HepG2 (cell line): ENCODE measurements at regions of chr6 and their contacts with region 1.

Region 1: GRCh38 chr6:53986165-53986720 is 125.0 kb upstream of the MLIP start:
- DNase-seq: peak; percentile 46
- ATAC-seq: peak; percentile 86
- H3K4me3 ChIP-seq: no peak overlapping the region
- H3K27ac ChIP-seq: no peak overlapping the region
- H3K4me1 ChIP-seq: no peaks in the 10 kb centered on the region
- H3K27me3 ChIP-seq: no peaks in the 10 kb centered on the region
- CTCF ChIP-seq: peak; percentile 82
- EP300 ChIP-seq: no peak
- POLR2A ChIP-seq: no peak
- RAD21 ChIP-seq: peak; percentile 82

Region 2: DNA sequence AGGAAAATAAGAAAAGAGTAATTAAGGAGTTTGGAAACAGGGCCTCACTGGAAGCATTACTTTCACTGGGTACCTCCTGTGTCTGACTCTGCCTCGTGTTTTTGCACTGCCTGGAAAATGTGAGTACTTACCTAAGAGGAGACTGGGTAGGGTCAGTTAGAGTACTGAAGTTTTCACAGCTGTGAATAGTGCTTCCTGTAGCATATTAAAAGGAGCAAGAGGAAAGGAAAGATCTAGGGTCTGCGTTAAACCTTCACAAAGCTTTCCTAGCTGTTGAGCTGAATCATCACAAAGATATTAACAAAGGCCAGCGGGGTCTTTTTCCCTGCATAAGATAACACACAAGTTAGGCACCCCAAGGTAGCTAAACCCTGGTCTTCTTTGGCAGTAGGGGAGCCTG is 207.3 kb after region 1 on chr6:
- CTCF ChIA-PET with region 1: no interaction called
- POLR2A ChIA-PET with region 1: no interaction called
- in situ Hi-C with region 1: no loop called
- intact Hi-C with region 1: loop called (anchors 1 kb)
- DNase-seq: no peak
- ATAC-seq: no peak
- H3K4me3 ChIP-seq: no peak overlapping the region
- H3K27ac ChIP-seq: no peak overlapping the region
- H3K4me1 ChIP-seq: no peaks in the 10 kb centered on the region
- H3K27me3 ChIP-seq: no peaks in the 10 kb centered on the region
- CTCF ChIP-seq: no peak
- EP300 ChIP-seq: no peak
- POLR2A ChIP-seq: no peak
- RAD21 ChIP-seq: no peak

Region 3: DNA sequence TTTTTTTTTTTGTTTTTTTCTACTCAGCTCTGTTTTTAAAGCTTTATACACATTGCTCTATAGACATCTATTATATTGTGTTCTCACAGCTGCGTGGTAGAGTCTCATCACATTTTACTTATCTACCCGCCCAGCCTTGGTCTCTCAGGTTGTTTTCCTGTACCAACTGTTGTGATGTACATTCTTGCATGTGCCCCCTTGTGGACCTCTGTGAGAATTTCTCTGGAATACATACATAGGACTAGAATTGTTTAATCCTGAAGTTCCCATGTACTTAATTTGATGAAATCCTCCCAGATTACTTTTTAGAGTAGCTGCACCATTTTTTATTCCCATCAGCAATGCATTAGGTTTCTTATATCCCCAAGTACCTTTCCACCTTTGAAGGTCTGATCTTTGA is 281.6 kb after region 1 on chr6:
- CTCF ChIA-PET with region 1: interaction called, 72 read pairs
- POLR2A ChIA-PET with region 1: no interaction called
- in situ Hi-C with region 1: loop called (anchors 5 kb)
- intact Hi-C with region 1: loop called (anchors 1 kb)
- DNase-seq: peak; percentile 67
- ATAC-seq: peak; percentile 91
- H3K4me3 ChIP-seq: no peak overlapping the region
- H3K27ac ChIP-seq: no peak overlapping the region
- H3K4me1 ChIP-seq: no peaks in the 10 kb centered on the region
- H3K27me3 ChIP-seq: no peaks in the 10 kb centered on the region
- CTCF ChIP-seq: peak; percentile 70
- EP300 ChIP-seq: no peak
- POLR2A ChIP-seq: no peak
- RAD21 ChIP-seq: peak; percentile 48; the same call in 1 of the 2 replicates

Region 4: DNA sequence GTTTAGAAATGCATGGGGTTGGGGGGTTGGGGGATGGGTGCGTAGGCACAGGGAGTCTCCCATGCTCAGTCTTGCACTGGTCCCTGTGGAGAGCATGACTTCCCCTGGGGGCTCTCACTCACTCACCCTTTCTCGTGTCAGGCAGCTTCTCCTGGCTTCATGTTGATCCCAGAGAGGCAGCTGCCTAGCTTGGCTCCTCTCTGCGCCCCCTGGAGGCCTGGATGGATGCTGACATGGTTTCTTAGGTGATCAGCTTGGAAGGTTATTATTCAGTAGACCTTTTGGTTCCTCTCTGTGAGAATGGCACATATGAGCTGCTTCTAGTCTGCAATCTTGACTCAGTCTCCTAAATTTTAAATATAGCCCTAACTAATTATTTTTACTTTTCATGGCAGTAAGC is 751.0 kb after region 1 on chr6:
- CTCF ChIA-PET with region 1: interaction called, 3 read pairs
- POLR2A ChIA-PET with region 1: no interaction called
- in situ Hi-C with region 1: no loop called
- intact Hi-C with region 1: loop called (anchors 2 kb)
- DNase-seq: peak; percentile 28
- ATAC-seq: peak; percentile 87
- H3K4me3 ChIP-seq: no peak overlapping the region
- H3K27ac ChIP-seq: no peak overlapping the region
- H3K4me1 ChIP-seq: no peaks in the 10 kb centered on the region
- H3K27me3 ChIP-seq: no peaks in the 10 kb centered on the region
- CTCF ChIP-seq: peak; percentile 61
- EP300 ChIP-seq: no peak
- POLR2A ChIP-seq: no peak
- RAD21 ChIP-seq: no peak

Region 5: GRCh38 chr6:54992789-54993188 is 1006.5 kb after region 1 on chr6:
- CTCF ChIA-PET with region 1: no interaction called
- POLR2A ChIA-PET with region 1: no interaction called
- in situ Hi-C with region 1: no loop called
- intact Hi-C with region 1: loop called (anchors 5 kb)
- DNase-seq: peak; percentile 48
- ATAC-seq: peak; percentile 90
- H3K4me3 ChIP-seq: no peak overlapping the region
- H3K27ac ChIP-seq: no peak overlapping the region
- H3K4me1 ChIP-seq: no peaks in the 10 kb centered on the region
- H3K27me3 ChIP-seq: no peaks in the 10 kb centered on the region
- CTCF ChIP-seq: peak; percentile 75
- EP300 ChIP-seq: no peak
- POLR2A ChIP-seq: no peak
- RAD21 ChIP-seq: 0 out of 2 replicates have a peak, but pooled peaks have one; percentile 45

Region 6: DNA sequence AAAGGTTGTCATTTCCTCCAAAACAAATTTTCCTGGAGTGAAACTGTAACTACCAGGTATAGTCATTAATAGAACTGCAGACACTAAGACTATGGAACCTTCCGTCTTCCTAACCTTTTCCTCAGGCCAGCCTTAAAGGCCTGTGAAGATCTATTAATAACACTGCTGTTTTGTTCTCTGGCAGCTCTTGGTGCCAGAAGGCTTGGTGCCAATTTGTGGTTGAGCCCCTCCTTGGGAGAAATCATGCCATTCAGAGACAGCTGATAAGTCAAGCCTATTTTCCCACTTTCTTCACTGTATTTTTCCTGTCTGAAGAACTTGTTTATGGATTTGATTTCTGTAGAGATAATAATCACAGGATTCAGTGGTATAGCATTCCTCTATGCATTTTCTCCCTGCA is 1252.9 kb after region 1 on chr6:
- CTCF ChIA-PET with region 1: no interaction called
- POLR2A ChIA-PET with region 1: no interaction called
- in situ Hi-C with region 1: loop called (anchors 25 kb)
- intact Hi-C with region 1: loop called (anchors 5 kb)
- DNase-seq: no peak
- ATAC-seq: no peak
- H3K4me3 ChIP-seq: no peak overlapping the region
- H3K27ac ChIP-seq: no peak overlapping the region
- H3K4me1 ChIP-seq: no peaks in the 10 kb centered on the region
- H3K27me3 ChIP-seq: no peaks in the 10 kb centered on the region
- CTCF ChIP-seq: no peak
- EP300 ChIP-seq: no peak
- POLR2A ChIP-seq: no peak
- RAD21 ChIP-seq: no peak